Mammary epithelial cell (primary cell): ENCODE measurements at regions of chr1 and their contacts with region 1.

Region 1: GRCh38 chr1:67500413-67500959 is 70.3 kb upstream of the SERBP1 start:
- DNase-seq: peak; percentile 74
- H3K4me3 ChIP-seq: no peak overlapping the region
- H3K27ac ChIP-seq: no peak overlapping the region
- H3K4me1 ChIP-seq: no peaks in the 10 kb centered on the region
- H3K27me3 ChIP-seq: no peaks in the 10 kb centered on the region
- CTCF ChIP-seq: peak; percentile 97 to 100

Region 2: DNA sequence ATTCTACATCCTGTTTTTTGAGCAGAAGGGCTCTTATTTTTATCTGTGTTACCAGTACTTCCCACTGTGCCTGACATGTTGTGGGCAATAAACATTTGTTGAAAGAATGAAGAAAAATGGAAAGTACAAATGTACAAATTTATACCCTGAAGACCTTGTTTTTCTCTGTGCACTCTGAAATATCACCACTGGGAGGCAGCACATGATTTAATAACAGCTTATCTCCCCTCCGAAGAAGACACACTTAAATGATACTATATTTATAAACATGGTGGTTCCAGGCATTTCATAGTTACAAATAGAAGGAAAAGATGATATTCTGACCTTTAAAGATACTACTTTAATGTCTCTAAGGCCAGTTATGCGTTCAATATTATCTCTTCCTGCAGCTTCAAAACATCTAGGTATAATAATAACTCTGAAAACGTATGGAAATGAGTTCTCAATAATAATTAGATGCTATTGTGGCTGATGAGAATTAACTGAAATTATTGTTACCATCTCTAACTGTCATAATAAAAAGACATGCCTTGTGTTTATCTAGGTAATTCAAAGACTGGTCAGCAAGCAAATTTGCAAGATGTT is 735.4 kb before region 1 on chr1:
- CTCF ChIA-PET with region 1: interaction called, 5 read pairs
- dilution Hi-C with region 1: no loop called
- in situ Hi-C with region 1: no loop called
- intact Hi-C with region 1: loop called (anchors 10 kb)
- DNase-seq: peak; percentile 25
- H3K4me3 ChIP-seq: no peak overlapping the region
- H3K27ac ChIP-seq: no peak overlapping the region
- H3K4me1 ChIP-seq: no peaks in the 10 kb centered on the region
- H3K27me3 ChIP-seq: peaks cover 2% of the 10 kb centered on the region
- CTCF ChIP-seq: peak; percentile 69 to 71

Region 3: DNA sequence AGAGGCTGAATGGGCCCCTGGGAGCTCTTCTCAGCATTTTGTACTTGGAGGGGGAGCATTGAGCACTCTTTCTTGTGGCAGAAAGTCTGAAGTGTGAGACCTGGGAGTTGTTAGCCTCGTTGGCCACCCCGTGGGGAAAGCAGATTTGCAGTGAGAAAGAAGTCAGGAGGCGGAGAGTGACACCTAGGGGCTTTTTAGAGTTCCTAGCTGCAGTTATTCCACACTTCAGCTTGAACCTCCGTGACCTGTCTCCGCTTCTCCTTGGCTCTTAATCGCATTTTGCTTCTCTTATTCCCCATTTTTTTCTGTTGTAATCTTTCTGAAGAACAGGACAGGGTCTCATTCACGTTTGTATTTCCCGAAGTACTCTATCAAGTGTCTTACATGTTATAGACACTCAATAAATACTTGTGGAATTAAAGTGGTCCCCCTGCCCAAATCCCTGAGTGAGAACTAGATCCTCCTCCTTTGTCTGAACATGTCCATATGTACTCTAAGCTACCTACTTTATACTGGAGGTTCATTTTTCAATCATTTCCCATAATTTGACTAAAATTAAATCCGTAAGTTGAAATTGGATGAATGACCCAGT is 351.2 kb before region 1 on chr1:
- CTCF ChIA-PET with region 1: no interaction called
- dilution Hi-C with region 1: no loop called
- in situ Hi-C with region 1: no loop called
- intact Hi-C with region 1: loop called (anchors 5 kb)
- DNase-seq: peak; percentile 75
- H3K4me3 ChIP-seq: no peak overlapping the region
- H3K27ac ChIP-seq: peak overlapping the region; percentile 13
- H3K4me1 ChIP-seq: peaks cover 23% of the 10 kb centered on the region
- H3K27me3 ChIP-seq: no peaks in the 10 kb centered on the region
- CTCF ChIP-seq: peak; percentile 84 to 93

Region 4: DNA sequence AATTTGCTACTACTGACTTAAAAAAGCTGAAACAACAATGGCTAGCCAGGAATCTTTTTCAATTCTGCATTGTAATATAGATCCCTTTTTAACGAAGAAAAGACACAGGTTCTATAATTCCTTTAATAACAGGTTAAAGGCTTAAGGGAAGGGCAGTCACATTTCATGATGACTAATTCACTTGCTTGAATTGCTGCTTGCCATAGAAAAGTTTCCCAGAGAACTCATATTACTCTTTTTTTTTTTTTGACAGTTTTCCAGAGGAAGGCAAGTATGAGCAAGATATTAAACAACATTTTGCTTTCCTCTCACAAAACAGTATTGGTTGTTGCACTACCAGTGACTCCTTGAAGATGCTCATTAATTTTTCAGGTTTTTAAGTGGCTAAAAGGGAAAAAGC is 273.3 kb before region 1 on chr1:
- CTCF ChIA-PET with region 1: no interaction called
- dilution Hi-C with region 1: loop called (anchors 5 kb)
- in situ Hi-C with region 1: loop called (anchors 5 to 10 kb)
- intact Hi-C with region 1: no loop called
- DNase-seq: peak; percentile 81
- H3K4me3 ChIP-seq: no peak overlapping the region
- H3K27ac ChIP-seq: no peak overlapping the region
- H3K4me1 ChIP-seq: no peaks in the 10 kb centered on the region
- H3K27me3 ChIP-seq: peaks cover 3% of the 10 kb centered on the region
- CTCF ChIP-seq: no peak

Region 5: GRCh38 chr1:67460676-67461500 is 39.6 kb before region 1 on chr1:
- CTCF ChIA-PET with region 1: interaction called, 4 read pairs
- dilution Hi-C with region 1: loop called (anchors 5 kb)
- in situ Hi-C with region 1: no loop called
- intact Hi-C with region 1: no loop called
- DNase-seq: no peak
- H3K4me3 ChIP-seq: no peak overlapping the region
- H3K27ac ChIP-seq: no peak overlapping the region
- H3K4me1 ChIP-seq: no peaks in the 10 kb centered on the region
- H3K27me3 ChIP-seq: no peaks in the 10 kb centered on the region
- CTCF ChIP-seq: no peak